Mammary epithelial cell (primary cell): ENCODE measurements at regions of chr20 and their contacts with region 1.

Region 1: GRCh38 chr20:41339507-41340326 is 904 bp upstream of the LPIN3 start:
- DNase-seq: peak; percentile 87
- H3K4me3 ChIP-seq: peak overlapping the region; percentile 28 to 47 (median 29)
- H3K27ac ChIP-seq: peak overlapping the region; percentile 64
- H3K4me1 ChIP-seq: peaks cover 20% of the 10 kb centered on the region
- H3K27me3 ChIP-seq: no peaks in the 10 kb centered on the region
- CTCF ChIP-seq: peak; percentile 88 to 97

Region 2: GRCh38 chr20:40970201-40970600 is 369.5 kb before region 1 on chr20:
- CTCF ChIA-PET with region 1: interaction called, 4 read pairs
- dilution Hi-C with region 1: no loop called
- in situ Hi-C with region 1: loop called (anchors 10 to 25 kb)
- intact Hi-C with region 1: loop called (anchors 1 kb)
- DNase-seq: no peak
- H3K4me3 ChIP-seq: no peak overlapping the region
- H3K27ac ChIP-seq: no peak overlapping the region
- H3K4me1 ChIP-seq: peaks cover 8% of the 10 kb centered on the region
- H3K27me3 ChIP-seq: no peaks in the 10 kb centered on the region
- CTCF ChIP-seq: peak in 1 of 2 donors; percentile 41

Region 3: GRCh38 chr20:41161886-41162285 is 177.8 kb before region 1 on chr20:
- CTCF ChIA-PET with region 1: interaction called, 13 read pairs
- dilution Hi-C with region 1: no loop called
- in situ Hi-C with region 1: no loop called
- intact Hi-C with region 1: no loop called
- DNase-seq: no peak
- H3K4me3 ChIP-seq: no peak overlapping the region
- H3K27ac ChIP-seq: no peak overlapping the region
- H3K4me1 ChIP-seq: peaks cover 20% of the 10 kb centered on the region
- H3K27me3 ChIP-seq: no peaks in the 10 kb centered on the region
- CTCF ChIP-seq: no peak

Region 4: GRCh38 chr20:41249406-41250281 is 90.1 kb before region 1 on chr20:
- CTCF ChIA-PET with region 1: no interaction called
- dilution Hi-C with region 1: no loop called
- in situ Hi-C with region 1: no loop called
- intact Hi-C with region 1: loop called (anchors 1 kb)
- DNase-seq: peak; percentile 78
- H3K4me3 ChIP-seq: no peak overlapping the region
- H3K27ac ChIP-seq: peak overlapping the region; percentile 69
- H3K4me1 ChIP-seq: peaks cover 22% of the 10 kb centered on the region
- H3K27me3 ChIP-seq: no peaks in the 10 kb centered on the region
- CTCF ChIP-seq: peak in 1 of 2 donors; percentile 1

Region 5: GRCh38 chr20:41411391-41411847 is 71.7 kb after region 1 on chr20:
- CTCF ChIA-PET with region 1: interaction called, 3 read pairs
- dilution Hi-C with region 1: no loop called
- in situ Hi-C with region 1: no loop called
- intact Hi-C with region 1: loop called (anchors 1 kb)
- DNase-seq: peak; percentile 5
- H3K4me3 ChIP-seq: no peak overlapping the region
- H3K27ac ChIP-seq: no peak overlapping the region
- H3K4me1 ChIP-seq: no peaks in the 10 kb centered on the region
- H3K27me3 ChIP-seq: no peaks in the 10 kb centered on the region
- CTCF ChIP-seq: peak; percentile 26 to 39

Region 6: GRCh38 chr20:41738604-41739206 is 399.0 kb after region 1 on chr20:
- CTCF ChIA-PET with region 1: no interaction called
- dilution Hi-C with region 1: no loop called
- in situ Hi-C with region 1: no loop called
- intact Hi-C with region 1: loop called (anchors 1 kb)
- DNase-seq: peak; percentile 11
- H3K4me3 ChIP-seq: no peak overlapping the region
- H3K27ac ChIP-seq: no peak overlapping the region
- H3K4me1 ChIP-seq: no peaks in the 10 kb centered on the region
- H3K27me3 ChIP-seq: no peaks in the 10 kb centered on the region
- CTCF ChIP-seq: peak; percentile 80 to 93